ENCODE measurements at regions of chr11 and their contacts with region 1.

Region 1: GRCh38 chr11:67382276-67383136 is 9.1 kb upstream of the CLCF1 start:
- DNase-seq: peak; percentile 88
- ATAC-seq: peak; percentile 89

Region 2: DNA sequence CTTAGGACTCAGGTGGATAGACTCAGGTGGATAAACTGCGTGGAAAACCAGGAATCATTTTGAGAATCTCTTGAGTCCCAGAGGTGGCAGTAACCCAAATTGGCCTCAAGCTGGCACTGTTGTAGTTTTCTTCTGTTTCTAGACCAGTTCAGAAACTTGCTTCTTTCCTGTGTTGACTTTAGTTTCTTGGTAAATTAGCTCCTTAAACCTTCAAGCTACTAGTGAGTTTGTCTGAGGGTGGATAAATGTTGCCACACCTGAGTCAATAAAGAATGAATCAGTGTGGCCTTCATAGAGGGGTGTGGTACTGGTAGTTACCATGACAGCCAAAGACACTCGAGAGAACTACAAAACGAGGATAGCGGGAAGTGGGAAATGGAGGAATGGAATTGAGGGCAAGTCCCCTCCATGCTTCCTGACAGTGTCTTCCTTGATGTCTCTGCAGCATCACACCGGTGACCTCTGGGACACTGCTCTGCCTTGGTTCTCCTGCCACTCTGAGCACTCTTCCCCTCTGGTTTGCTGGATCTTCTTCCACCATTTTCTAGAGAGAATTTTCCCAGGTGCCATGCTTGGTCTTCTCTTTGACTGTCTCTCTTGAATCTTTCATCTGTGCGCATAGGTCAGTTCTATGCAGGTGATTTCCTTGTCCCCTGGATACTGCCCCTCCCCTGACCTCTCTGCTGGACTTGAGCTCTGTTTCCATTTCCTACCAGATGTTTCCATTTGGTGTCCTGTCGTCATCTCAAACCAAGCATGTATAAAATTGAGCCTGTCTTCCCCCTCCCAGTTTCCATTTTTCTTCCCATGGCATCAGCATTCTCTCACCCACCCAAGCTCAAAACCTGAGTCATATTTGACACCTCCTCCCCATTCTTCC is 36.3 kb before region 1 on chr11:
- intact Hi-C with region 1: loop called (anchors 5 kb)
- DNase-seq: no peak
- ATAC-seq: peak; percentile 7

Region 3: GRCh38 chr11:67356864-67357561 is 25.5 kb before region 1 on chr11:
- intact Hi-C with region 1: loop called (anchors 2 kb)
- DNase-seq: peak; percentile 67
- ATAC-seq: peak; percentile 13

Region 4: DNA sequence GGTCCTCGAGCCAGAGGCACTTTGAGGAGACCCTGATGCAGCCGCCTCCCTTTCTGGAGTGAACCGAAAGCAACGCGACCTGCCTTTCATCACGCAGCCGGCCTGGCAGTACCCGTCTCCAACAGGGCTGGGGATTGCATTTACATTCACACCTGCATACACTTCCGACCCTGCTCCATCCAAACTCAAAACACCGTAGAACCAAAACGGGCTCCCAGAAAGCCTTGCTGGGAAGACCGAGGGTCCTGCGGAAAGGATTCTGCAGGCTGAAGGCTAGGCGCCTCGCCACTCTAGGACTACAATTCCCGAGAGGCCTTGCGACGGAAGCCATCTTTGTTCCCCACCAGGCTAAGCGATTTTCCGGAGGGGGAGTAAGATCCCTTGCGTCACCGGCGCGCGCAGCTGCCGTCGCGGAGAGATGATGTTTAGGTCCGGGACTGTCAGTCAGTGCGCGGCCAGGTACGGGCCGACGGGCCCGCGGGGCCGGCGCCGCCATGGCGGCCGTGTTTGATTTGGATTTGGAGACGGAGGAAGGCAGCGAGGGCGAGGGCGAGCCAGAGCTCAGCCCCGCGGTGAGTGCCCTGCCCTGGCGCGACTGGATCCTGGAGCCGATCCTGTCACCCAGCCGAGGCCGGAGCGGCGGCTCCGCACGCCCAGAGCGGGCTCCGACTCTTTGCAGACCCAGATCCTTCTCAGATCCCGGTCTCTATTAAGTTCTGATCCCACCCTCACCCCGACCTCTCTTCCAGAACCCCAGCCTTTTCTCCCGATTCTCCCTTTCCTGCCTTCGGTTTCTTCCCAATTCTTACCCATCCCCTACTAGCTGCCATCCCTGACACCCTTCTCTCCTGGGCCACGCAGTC is 45.8 kb after region 1 on chr11 and contains the start of gene RPS6KB2:
- intact Hi-C with region 1: no loop called
- DNase-seq: peak; percentile 100
- ATAC-seq: peak; percentile 94
- total RNA-seq, gene RPS6KB2: 24.6 TPM